Colonic mucosa (tissue), 4 donors: ENCODE measurements at regions of chr3 and their contacts with region 1.

Region 1: DNA sequence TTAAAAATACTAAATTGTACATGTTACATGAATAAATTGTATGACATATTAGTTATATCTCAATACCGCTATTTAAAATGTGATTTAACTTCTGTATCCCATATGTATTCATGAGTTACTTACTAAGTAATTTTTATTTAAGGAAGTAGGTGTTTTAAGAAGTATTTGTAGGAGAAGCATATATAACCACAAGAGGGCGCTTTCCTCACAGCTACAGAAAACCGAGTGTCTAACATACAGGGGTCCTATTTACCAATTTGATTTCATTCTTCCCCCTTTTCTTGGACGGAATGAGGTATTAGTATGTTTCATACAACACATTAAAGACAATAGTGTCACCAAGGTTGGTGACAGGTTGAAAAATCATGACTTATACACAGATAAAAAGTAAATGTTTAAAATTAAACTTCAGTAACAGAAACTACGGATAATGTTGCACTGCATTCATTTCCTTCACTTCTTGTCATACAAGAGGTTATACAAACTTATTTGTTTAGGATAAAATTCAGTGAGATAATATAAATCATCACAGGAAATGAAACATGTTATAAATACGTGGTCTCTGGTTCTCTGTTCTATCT is 253.6 kb downstream of the MAGI1 start:
- DNase-seq: no peak
- H3K4me3 ChIP-seq: no peak overlapping the region
- H3K27ac ChIP-seq: no peak overlapping the region
- H3K4me1 ChIP-seq: no peaks in the 10 kb centered on the region
- H3K27me3 ChIP-seq: no peaks in the 10 kb centered on the region
- CTCF ChIP-seq: peak; percentile 72

Region 2: DNA sequence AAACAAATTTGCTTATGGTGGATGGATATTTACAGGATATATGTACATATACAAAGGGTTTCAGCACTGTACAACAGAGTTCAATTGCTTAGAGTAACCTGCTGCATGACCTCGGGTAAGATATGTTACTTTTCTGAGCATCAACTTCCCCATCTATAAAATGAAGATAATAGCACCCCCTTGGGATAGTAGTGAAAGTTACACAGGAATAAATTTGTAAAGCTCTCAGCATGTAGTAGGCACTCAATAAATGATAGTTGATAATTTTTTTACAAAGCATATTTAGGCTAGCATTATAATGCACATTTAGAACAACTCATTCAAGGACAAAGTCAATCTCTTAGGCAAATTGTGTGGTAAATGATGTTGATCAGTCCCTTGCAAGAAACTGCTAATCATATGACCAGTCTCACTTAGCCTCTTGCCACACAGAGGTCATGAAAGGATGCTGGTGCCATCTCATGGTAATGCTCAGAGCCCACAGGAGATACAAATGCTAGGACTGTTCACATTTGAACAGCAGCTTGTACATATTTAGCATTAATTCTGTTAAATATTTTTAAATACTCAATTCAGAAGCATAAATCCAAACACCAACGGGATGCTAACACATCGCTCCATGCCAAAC is 129.7 kb after region 1 on chr3:
- intact Hi-C with region 1: loop called (anchors 10 kb)
- DNase-seq: no peak
- H3K4me3 ChIP-seq: no peak overlapping the region
- H3K27ac ChIP-seq: no peak overlapping the region
- H3K4me1 ChIP-seq: no peaks in the 10 kb centered on the region
- H3K27me3 ChIP-seq: no peaks in the 10 kb centered on the region
- CTCF ChIP-seq: no peak

Region 3: DNA sequence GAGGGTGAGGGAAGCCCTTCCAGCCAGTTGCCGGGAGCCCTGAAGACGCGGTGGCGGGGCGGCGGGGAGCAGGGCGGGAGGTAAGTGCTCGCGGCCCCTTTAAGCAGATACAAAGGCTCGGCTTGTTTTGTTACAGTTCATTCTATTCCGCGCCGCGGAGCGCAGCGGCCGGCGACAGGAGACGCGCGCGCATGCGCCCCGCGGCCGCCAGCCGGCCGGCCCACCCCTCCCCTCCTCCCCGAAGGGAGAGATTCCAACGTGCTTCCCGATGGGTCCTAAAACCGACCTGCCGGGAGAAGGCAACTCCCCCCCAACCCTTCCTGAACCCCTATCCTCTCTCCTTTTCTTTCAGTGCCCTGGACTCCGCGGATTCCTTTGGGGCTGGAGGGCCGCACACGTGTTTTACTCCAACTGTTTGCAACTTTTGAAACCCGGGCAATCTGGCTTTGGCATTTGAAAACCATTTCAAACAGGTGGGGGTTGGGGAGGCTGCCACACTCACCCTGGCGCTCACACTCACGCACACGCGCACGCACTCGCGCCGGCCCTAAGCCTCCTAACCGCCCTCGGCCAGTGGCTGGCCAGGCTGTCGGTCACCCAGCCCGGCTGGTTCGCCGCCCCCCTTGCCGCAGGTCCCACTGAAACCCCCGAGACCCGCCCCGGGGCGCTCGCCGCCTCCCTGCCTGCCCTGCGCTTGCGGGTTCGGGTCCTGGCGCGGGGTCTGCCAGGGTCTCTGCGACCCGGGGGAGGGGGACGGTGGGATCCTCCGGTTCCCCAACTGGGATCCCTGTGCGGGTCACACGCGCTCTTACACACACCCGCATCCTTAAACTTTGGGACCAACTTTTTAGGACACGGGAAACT is 253.8 kb after region 1 on chr3 and contains the start of gene MAGI1:
- intact Hi-C with region 1: loop called (anchors 5 kb)
- DNase-seq: peak; percentile 95
- H3K4me3 ChIP-seq: peak within 1 kb of the TSS; percentile 65
- H3K27ac ChIP-seq: peak within 1 kb of the TSS; percentile 85
- H3K4me1 ChIP-seq: no peaks in the 10 kb centered on the region
- H3K27me3 ChIP-seq: no peaks in the 10 kb centered on the region
- CTCF ChIP-seq: no peak
- total RNA-seq, gene MAGI1: 23.4 to 41.4 TPM

Region 4: DNA sequence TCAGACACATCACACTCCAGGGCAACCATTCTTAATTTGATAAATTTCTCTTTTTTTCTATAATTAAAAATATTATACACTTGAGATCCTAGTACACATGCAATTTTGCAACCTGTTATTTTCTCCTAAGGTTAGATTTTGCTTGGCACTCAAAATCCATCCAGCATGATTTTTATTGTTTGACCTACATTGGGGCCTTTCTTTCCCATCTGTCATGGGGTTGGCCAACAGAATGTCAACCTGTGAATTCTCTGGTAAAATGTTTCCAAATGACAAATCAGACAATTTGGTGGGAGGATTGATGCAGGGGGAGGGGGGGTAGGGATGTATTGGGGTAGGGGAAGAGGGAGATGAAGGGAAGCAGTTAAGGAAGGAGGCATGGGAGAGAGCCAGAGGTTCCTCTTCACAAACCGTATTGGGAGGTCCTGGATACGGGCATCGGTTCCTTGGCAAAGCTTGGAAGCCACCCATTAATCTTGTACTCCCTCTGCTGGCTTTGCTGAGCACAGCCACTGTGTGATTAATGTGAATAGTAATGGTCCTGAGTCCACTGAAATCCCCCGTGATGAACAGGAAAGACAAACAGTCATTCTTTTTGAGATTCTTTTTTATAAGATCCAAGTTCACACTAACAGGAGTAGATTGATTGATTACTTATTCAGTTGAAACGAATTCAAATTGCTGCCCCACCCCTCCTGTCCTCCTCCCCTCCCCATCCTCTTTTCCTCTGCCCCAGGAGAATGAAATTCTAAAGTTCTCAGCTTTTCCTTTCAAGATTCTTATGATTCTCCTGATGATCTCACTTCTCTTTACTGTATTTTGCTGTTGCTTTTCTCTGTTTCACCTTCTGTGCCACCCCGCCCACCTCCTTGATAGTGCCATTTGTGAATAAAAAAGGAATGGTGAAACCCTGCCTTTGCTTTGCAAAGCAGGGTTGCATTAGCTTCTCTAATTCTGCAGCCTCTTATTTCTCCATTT is 353.5 kb after region 1 on chr3:
- intact Hi-C with region 1: loop called (anchors 2 kb)
- DNase-seq: peak; percentile 53
- H3K4me3 ChIP-seq: no peak overlapping the region
- H3K27ac ChIP-seq: no peak overlapping the region
- H3K4me1 ChIP-seq: no peaks in the 10 kb centered on the region
- H3K27me3 ChIP-seq: no peaks in the 10 kb centered on the region
- CTCF ChIP-seq: peak; percentile 56

Region 5: GRCh38 chr3:66220602-66221377 is 435.6 kb after region 1 on chr3 and contains the start of gene SLC25A26:
- intact Hi-C with region 1: no loop called
- DNase-seq: peak; percentile 98
- H3K4me3 ChIP-seq: peak within 1 kb of the TSS; percentile 88
- H3K27ac ChIP-seq: peak within 1 kb of the TSS; percentile 66
- H3K4me1 ChIP-seq: peaks cover 3% of the 10 kb centered on the region
- H3K27me3 ChIP-seq: no peaks in the 10 kb centered on the region
- CTCF ChIP-seq: no peak
- total RNA-seq, gene SLC25A26: 17.1 to 17.8 TPM